HepG2 (cell line): ENCODE measurements at regions of chr1 and their contacts with region 1.

Region 1: DNA sequence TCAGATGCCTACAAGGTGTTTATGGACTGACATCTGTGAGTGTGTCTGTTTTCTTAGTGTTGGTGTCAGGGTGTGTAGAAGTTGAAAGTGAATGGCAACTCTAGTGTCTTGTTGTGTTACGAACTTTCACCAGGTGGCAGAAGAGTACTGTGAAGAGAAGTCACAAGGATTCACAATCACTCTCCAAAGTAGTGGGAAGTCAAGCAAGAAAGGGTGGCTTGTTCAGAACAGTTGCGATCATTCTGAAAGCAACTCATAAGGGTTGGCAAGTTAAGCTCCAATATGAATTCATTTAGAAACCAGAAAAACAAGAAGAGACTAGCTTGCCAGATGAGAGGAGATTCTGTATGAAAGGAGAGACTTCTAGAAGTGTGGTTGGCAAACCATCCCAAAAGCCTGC is 86.1 kb downstream of the FASLG start:
- DNase-seq: peak; percentile 52
- ATAC-seq: peak; percentile 87
- H3K4me3 ChIP-seq: no peak overlapping the region
- H3K27ac ChIP-seq: no peak overlapping the region
- H3K4me1 ChIP-seq: peaks cover 22% of the 10 kb centered on the region
- H3K27me3 ChIP-seq: no peaks in the 10 kb centered on the region; a peak in 1 of 5 replicates
- CTCF ChIP-seq: peak; percentile 86
- EP300 ChIP-seq: no peak
- POLR2A ChIP-seq: no peak
- RAD21 ChIP-seq: peak; percentile 71

Region 2: GRCh38 chr1:172727956-172728603 is 16.9 kb before region 1 on chr1:
- CTCF ChIA-PET with region 1: no interaction called
- POLR2A ChIA-PET with region 1: no interaction called
- in situ Hi-C with region 1: no loop called
- intact Hi-C with region 1: no loop called
- DNase-seq: peak; percentile 71
- ATAC-seq: peak; percentile 99
- H3K4me3 ChIP-seq: no peak overlapping the region
- H3K27ac ChIP-seq: no peak overlapping the region
- H3K4me1 ChIP-seq: no peaks in the 10 kb centered on the region
- H3K27me3 ChIP-seq: no peaks in the 10 kb centered on the region
- CTCF ChIP-seq: peak; percentile 70
- EP300 ChIP-seq: no peak
- POLR2A ChIP-seq: no peak
- RAD21 ChIP-seq: peak; percentile 73

Region 3: DNA sequence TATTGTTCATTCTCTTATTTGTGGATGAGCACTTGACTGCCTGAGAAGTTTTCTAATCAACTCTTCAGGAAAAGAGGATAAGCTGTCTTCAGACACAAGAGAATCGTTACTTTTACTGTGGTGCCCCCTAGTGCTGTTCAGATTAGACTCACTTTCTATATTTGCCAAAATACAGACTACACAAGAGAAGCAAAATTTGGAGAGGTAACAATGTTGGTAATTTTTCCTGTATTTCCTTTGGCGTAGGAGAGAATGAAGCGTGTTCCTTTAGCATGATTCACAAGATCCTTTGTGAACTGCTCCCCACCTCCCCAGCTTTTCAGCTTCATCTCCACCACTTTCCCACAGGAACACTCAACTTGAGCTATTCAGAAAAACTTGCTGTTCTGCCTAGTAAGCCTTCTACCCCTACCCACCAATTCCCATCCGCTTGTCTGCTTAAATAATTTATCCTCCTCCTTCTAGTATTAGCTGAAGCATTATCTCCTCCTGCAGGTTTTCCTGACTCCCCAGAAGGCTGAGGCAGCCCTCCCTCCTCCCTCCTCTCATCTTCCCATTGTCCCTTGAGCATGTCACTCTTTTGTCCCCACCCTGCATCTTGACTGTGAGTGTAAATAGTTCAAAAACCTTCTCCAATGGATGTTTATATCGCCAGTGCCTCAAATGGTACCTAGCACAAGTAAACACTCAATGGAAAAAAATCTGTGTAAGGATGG is 457.6 kb after region 1 on chr1:
- CTCF ChIA-PET with region 1: interaction called, 10 read pairs
- POLR2A ChIA-PET with region 1: no interaction called
- in situ Hi-C with region 1: no loop called
- intact Hi-C with region 1: loop called (anchors 1 kb)
- DNase-seq: peak; percentile 42
- ATAC-seq: peak; percentile 69
- H3K4me3 ChIP-seq: peak overlapping the region; percentile 18 to 48 (median 29)
- H3K27ac ChIP-seq: no peak overlapping the region
- H3K4me1 ChIP-seq: peaks cover 58% of the 10 kb centered on the region
- H3K27me3 ChIP-seq: no peaks in the 10 kb centered on the region
- CTCF ChIP-seq: peak; percentile 78
- EP300 ChIP-seq: no peak
- POLR2A ChIP-seq: no peak
- RAD21 ChIP-seq: peak; percentile 65

Region 4: DNA sequence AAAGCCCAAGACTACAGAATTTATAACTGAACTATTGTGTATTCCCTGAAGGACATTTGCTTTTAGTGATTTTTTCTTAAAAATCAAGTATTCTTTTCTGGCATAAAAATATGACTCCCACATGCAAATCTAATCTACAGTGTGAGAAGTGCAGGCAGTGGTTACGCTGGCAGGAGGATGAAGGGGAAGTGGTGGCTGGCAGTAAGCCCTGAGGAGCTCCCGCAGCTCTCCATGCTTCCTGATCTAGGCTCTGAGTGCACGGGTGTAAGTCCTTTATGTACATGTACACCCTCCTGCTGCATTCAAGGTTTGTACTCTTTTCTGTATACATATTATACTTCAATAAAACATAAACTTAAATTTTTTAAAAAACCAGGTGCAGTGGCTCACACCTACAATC is 664.6 kb after region 1 on chr1:
- CTCF ChIA-PET with region 1: no interaction called
- POLR2A ChIA-PET with region 1: no interaction called
- in situ Hi-C with region 1: loop called (anchors 10 kb)
- intact Hi-C with region 1: loop called (anchors 5 kb)
- DNase-seq: no peak
- ATAC-seq: no peak
- H3K4me3 ChIP-seq: no peak overlapping the region
- H3K27ac ChIP-seq: no peak overlapping the region
- H3K4me1 ChIP-seq: no peaks in the 10 kb centered on the region
- H3K27me3 ChIP-seq: no peaks in the 10 kb centered on the region
- CTCF ChIP-seq: no peak
- EP300 ChIP-seq: no peak
- POLR2A ChIP-seq: no peak
- RAD21 ChIP-seq: no peak

Region 5: DNA sequence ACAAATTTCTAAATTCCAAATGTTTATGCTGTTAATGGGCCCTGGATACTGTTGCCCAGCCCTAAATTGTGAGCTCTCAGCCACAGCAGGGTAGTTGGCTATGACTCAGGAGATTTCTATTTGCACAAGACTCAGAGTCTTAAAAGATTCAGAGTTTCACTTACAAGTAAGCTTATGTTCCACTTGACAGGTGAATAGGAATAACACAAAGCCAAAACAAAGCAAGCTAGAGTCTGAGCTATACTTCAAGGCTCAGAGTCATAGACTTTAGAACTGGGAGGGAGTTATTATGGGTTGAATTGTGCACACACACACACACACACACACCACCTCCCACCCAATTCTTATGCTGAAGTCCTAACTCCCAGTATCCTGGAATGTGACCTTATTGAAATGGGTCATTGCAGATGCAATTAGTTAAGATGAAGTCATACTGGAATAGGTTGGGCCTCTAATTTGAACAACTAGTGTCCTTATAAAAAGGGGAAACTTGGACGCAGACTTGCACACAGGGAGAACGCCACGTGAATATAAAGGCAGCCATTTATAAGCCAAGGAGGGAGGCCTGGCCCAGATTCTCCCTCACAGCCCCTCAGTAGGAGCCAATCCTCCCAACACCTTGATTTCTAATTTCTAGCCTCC is 762.3 kb after region 1 on chr1:
- CTCF ChIA-PET with region 1: no interaction called
- POLR2A ChIA-PET with region 1: no interaction called
- in situ Hi-C with region 1: no loop called
- intact Hi-C with region 1: loop called (anchors 10 kb)
- DNase-seq: no peak
- ATAC-seq: no peak
- H3K4me3 ChIP-seq: no peak overlapping the region
- H3K27ac ChIP-seq: no peak overlapping the region
- H3K4me1 ChIP-seq: peaks cover 20% of the 10 kb centered on the region
- H3K27me3 ChIP-seq: no peaks in the 10 kb centered on the region
- CTCF ChIP-seq: no peak
- EP300 ChIP-seq: no peak
- POLR2A ChIP-seq: no peak
- RAD21 ChIP-seq: no peak

Region 6: GRCh38 chr1:173824331-173825081 is 1079.5 kb after region 1 on chr1 and contains the starts of genes CENPL and DARS2:
- CTCF ChIA-PET with region 1: no interaction called
- POLR2A ChIA-PET with region 1: no interaction called
- in situ Hi-C with region 1: loop called (anchors 25 kb)
- intact Hi-C with region 1: loop called (anchors 10 kb)
- DNase-seq: peak; percentile 96
- ATAC-seq: peak; percentile 94
- H3K4me3 ChIP-seq: peak within 1 kb of the TSS; percentile 69 to 99 (median 80)
- H3K27ac ChIP-seq: peak within 1 kb of the TSS; percentile 89
- H3K4me1 ChIP-seq: peaks cover 45% of the 10 kb centered on the region
- H3K27me3 ChIP-seq: no peaks in the 10 kb centered on the region; a peak in 1 of 5 replicates
- CTCF ChIP-seq: no peak
- EP300 ChIP-seq: no peak; a peak in 1 of 4 replicates
- POLR2A ChIP-seq: peak; percentile 63 to 80
- RAD21 ChIP-seq: no peak
- total RNA-seq, gene CENPL: 14.2 and 17.9 TPM in 2 replicates
- total RNA-seq, gene DARS2: 27.7 and 45.4 TPM in 2 replicates